Activated CD8-positive, alpha-beta T cell treated with anti-CD3 and anti-CD28 coated beads for 36 hours (primary cell): ENCODE measurements at regions of chr5 and their contacts with region 1.

Region 1: DNA sequence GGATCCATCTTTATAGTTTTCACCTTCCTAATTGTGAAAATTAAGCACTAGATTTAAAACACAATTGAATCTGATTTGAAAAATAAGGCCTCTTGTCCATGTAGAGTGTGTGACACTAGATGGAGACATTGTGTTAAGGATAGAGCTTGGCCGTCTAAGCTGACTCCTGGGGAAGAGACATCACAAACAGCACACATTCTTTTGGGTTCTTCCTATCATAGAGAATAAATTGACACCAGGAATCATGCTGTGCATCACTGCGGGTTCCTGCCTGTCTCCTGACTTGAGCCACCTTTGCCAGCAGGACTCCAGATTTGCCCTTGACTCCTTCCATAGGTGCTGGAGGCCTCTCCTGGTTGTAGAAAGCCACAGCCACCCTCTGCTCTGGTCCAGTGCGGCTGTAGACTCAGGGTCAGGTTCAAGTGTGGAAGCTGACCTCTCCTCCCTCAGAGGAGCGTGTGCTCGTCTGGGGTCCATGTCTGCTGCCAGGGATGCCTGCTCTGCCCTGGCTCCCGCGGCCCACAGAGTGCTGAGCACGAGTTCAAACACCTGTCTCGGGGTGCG is 11.2 kb downstream of the ROPN1L start:
- DNase-seq: no peak
- ATAC-seq: peak; percentile 73
- H3K4me3 Mint-ChIP-seq: no peak overlapping the region
- H3K27ac Mint-ChIP-seq: no peak overlapping the region
- H3K4me1 Mint-ChIP-seq: no peaks in the 10 kb centered on the region
- H3K27me3 Mint-ChIP-seq: no peaks in the 10 kb centered on the region
- CTCF ChIP-seq: peak; percentile 60

Region 2: DNA sequence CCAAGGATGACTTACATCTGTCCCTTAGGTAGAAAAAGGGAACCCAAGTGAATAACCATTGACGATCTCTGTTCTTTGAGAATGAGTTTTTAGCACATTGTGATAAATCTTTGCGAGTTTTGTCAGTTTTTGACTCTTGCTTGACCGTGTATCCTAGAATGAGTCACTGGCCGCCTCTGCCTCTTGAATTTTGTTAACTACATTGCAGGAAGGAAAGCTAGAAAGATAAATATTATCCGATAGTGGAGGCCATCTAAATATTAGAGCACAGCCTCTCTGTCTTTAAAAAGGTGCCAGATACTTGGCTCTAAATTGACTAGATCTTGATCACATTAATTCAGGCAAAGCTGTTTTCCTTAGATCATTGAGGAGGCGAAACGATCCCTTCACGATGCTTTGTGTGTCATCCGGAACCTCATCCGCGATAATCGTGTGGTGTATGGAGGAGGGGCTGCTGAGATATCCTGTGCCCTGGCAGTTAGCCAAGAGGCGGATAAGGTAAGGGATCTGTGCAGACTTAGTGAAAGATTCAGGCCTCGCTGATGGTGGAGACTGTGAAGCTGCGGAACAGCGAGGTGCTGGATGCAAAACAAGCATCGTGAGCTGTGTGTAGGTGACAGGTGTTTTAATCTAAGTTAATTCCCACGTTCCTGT is 190.6 kb before region 1 on chr5:
- CTCF ChIA-PET with region 1: no interaction called
- POLR2A ChIA-PET with region 1: no interaction called
- intact Hi-C with region 1: no loop called
- DNase-seq: no peak
- ATAC-seq: no peak
- H3K4me3 Mint-ChIP-seq: no peak overlapping the region
- H3K27ac Mint-ChIP-seq: no peak overlapping the region
- H3K4me1 Mint-ChIP-seq: peaks cover 10% of the 10 kb centered on the region
- H3K27me3 Mint-ChIP-seq: no peaks in the 10 kb centered on the region
- CTCF ChIP-seq: no peak

Region 3: DNA sequence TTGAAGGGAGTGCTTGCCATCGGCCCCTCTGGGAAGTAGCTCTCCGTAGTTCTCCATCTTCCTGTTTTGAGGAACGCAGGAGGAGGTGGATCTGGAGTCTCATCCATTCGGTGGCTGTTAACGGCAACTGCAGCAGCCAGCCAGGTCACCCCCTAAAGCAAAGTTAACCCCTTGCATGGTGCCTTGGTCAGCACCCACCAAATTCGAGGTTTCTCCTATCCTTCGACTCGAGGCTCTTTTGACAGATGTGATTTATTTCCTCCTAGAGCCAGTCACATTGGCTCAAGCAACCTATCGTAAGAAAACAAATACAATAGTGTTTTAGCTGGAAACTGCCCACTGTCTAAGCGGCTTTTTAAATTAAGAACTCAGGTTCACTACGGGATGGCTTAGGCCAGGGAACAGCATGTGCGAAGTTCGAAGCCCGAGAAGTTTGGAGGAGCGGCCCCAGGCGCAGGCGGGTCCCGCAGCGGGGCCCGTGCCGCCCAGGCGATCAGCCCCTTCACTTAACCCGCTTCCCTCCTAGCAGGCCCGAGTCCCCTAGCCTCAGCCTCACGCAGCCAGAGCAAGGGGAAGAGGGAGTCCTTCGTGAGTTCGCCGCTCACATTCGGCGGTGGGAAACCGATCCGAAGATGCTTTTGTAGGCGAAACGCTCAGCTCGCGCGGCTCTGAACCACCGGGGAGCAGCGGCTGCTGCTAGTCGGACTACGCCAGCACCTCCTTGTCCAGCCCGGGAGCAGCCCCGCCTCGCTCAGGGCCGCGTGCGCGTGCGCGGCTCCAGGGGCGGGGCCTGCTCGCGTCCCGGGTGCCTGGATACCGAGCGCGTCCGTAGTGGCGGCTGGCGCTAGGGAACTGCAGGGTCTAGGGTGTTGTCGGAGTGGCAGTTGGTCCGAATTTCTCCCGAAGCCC is 11.5 kb before region 1 on chr5 and contains the start of gene ROPN1L:
- CTCF ChIA-PET with region 1: interaction called, 11 read pairs
- POLR2A ChIA-PET with region 1: no interaction called
- intact Hi-C with region 1: no loop called
- DNase-seq: peak; percentile 76
- ATAC-seq: peak; percentile 98
- H3K4me3 Mint-ChIP-seq: peak within 1 kb of the TSS; percentile 72
- H3K27ac Mint-ChIP-seq: no peak within 1 kb of the TSS
- H3K4me1 Mint-ChIP-seq: peaks cover 27% of the 10 kb centered on the region
- H3K27me3 Mint-ChIP-seq: peaks cover 8% of the 10 kb centered on the region
- CTCF ChIP-seq: no peak
- total RNA-seq, gene ROPN1L: not detected

Region 4: GRCh38 chr5:10635257-10635866 is 182.5 kb after region 1 on chr5:
- CTCF ChIA-PET with region 1: interaction called, 89 read pairs
- POLR2A ChIA-PET with region 1: no interaction called
- intact Hi-C with region 1: no loop called
- DNase-seq: peak; percentile 94
- ATAC-seq: peak; percentile 82
- H3K4me3 Mint-ChIP-seq: peak overlapping the region; percentile 73
- H3K27ac Mint-ChIP-seq: peak overlapping the region; percentile 100
- H3K4me1 Mint-ChIP-seq: peaks cover 59% of the 10 kb centered on the region
- H3K27me3 Mint-ChIP-seq: no peaks in the 10 kb centered on the region
- CTCF ChIP-seq: no peak

Region 5: DNA sequence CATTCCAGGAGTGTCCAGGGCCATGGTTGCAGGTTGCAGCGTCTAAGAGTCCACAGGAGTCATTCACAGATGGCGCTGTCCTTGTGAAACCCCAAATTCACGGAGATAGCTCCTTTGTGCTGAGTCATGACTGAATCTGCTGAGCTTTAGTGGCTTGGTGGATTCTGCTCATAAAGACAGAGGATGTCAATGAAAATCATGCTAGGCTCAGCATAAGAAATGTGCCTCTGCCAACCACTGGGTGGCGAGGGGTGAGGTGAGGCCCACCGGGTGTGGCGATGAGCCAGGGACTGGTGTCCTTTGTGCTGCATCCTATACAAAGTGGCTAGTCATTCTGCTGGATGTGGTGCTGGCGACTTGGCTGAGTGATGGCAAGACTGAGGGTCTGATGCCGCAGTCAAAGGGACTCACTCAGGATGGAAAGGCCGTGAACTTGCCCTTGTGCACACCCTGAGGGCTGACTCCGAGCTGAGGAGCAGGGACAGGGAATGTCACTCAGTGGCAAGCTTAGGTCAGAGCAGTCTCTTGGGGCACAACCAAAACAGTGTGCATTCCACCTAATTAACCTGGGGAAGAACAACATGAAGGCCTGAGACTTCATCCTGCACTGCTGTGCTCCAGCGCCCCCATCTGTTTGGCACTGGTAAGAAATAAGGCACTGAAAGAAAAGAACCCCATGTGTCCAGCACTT is 236.7 kb after region 1 on chr5:
- CTCF ChIA-PET with region 1: interaction called, 21 read pairs
- POLR2A ChIA-PET with region 1: no interaction called
- intact Hi-C with region 1: no loop called
- DNase-seq: peak; percentile 68
- ATAC-seq: peak; percentile 74
- H3K4me3 Mint-ChIP-seq: no peak overlapping the region
- H3K27ac Mint-ChIP-seq: no peak overlapping the region
- H3K4me1 Mint-ChIP-seq: no peaks in the 10 kb centered on the region
- H3K27me3 Mint-ChIP-seq: no peaks in the 10 kb centered on the region
- CTCF ChIP-seq: peak; percentile 61

Region 6: GRCh38 chr5:11494340-11494739 is 1041.5 kb after region 1 on chr5:
- CTCF ChIA-PET with region 1: no interaction called
- POLR2A ChIA-PET with region 1: no interaction called
- intact Hi-C with region 1: loop called (anchors 10 kb)
- DNase-seq: no peak
- ATAC-seq: no peak
- H3K4me3 Mint-ChIP-seq: no peak overlapping the region
- H3K27ac Mint-ChIP-seq: no peak overlapping the region
- H3K4me1 Mint-ChIP-seq: no peaks in the 10 kb centered on the region
- H3K27me3 Mint-ChIP-seq: no peaks in the 10 kb centered on the region
- CTCF ChIP-seq: no peak